Posterior cingulate gyrus (tissue), 11 donors: ENCODE measurements at regions of chr1 and their contacts with region 1.

Region 1: DNA sequence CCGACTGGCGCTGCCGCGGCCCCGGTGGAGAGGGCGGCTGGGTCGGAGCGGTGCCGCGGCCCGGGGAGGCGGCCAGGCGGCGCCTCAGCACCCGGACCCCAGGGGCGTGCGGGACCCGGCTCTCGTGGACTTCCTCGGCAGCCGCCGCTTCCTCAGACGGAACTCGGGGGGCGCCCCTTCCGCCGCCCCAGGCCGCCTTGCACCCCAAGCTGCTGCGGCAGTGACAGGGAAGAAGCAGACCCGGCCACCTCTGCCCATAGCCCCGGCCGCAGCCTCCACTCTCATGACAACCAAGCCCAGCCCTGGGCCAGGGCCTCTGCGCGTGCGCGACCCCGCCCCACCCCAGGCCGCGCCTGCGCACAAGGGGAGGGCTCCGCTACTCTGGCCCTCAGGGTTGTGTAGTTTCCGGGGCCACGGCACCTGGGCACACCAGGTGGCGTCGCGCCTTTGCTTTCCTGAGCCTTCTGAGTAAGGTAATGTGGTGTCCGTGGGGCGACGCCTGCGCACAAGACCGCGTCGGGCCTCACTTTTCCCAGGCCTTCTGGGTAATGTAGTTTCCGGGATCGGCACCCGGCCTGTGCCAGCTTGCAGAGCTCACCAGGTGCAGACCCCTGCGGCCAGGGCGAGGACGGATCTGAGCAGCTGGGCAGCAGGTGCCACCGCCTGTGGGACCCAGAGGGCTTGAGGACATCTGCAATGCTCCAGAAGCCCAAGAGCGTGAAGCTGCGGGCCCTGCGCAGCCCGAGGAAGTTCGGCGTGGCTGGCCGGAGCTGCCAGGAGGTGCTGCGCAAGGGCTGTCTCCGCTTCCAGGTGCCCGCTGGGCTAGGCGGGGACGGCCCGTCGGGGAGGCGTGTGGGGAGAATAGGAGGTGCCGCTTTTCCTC is at the starts of genes CEP104 and DFFB:
- DNase-seq: peak; percentile 74 to 98 (median 86)

Region 2: GRCh38 chr1:3821004-3821403 is 36.1 kb before region 1 on chr1:
- intact Hi-C with region 1: no loop called
- DNase-seq: peak in 1 of 10 donors; percentile 53

Region 3: GRCh38 chr1:3900119-3900968 is 43.2 kb after region 1 on chr1 and contains the start of gene C1orf174:
- intact Hi-C with region 1: loop called (anchors 2 kb)
- DNase-seq: peak; percentile 92 to 99 (median 96)